Ovary (tissue), 10 donors: ENCODE measurements at regions of chr6 and their contacts with region 1.

Region 1: DNA sequence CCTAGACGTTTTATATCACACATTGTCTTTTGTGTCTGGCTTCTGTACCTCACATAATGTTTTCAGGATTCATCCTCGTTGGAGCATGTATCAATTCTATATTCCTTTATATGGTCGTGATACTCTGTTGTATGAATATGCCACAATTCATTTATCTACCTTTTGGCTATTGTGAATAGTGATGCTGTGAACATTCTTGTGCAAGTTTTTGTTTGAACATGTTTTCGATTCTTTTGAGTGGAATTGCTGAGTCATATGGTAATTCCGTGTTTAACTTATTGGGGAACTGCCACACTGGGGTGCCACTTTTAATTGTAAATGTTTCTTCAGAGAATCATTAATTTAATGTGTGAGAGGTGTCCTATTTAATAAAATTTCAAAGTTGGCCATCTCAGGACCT is 101.2 kb downstream of the SLC35B3 start:
- DNase-seq: no peak
- H3K4me3 ChIP-seq: no peak overlapping the region
- H3K27ac ChIP-seq: no peak overlapping the region
- H3K4me1 ChIP-seq: no peaks in the 10 kb centered on the region
- H3K27me3 ChIP-seq: no peaks in the 10 kb centered on the region
- CTCF ChIP-seq: no peak
- EP300 ChIP-seq: no peak
- POLR2A ChIP-seq: no peak

Region 2: DNA sequence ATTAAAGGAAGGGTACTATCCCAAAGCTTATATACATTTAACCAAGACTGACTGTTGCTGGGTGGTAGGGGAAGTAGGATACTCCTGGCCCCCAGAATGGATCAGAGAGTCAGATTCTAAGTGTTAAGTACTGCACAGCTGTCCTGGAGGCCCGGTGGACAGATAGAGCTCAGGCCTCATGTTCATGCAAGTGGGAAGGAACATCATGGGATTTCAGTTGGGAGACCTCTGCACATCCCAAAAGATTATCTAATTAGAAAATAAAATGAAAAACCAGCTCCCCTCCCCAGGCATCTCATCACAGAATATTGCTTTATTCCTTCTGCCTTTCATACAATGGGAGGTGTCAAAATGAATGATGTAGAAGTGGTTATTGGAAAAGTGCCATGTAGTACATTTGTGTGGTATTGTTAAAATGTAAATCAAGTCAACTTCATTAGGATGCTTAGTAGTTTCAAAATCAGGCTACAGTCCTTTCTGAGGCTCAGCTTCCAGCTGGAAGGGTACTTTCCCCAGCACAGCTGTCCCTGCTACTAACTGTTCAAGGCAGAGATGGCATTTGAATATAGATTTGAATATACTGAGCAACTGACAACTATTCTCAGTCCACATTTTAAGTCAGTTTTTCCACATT is 18.3 kb after region 1 on chr6:
- intact Hi-C with region 1: no loop called
- DNase-seq: no peak
- H3K4me3 ChIP-seq: no peak overlapping the region
- H3K27ac ChIP-seq: no peak overlapping the region
- H3K4me1 ChIP-seq: no peaks in the 10 kb centered on the region
- H3K27me3 ChIP-seq: no peaks in the 10 kb centered on the region
- CTCF ChIP-seq: no peak
- EP300 ChIP-seq: no peak
- POLR2A ChIP-seq: no peak

Region 3: DNA sequence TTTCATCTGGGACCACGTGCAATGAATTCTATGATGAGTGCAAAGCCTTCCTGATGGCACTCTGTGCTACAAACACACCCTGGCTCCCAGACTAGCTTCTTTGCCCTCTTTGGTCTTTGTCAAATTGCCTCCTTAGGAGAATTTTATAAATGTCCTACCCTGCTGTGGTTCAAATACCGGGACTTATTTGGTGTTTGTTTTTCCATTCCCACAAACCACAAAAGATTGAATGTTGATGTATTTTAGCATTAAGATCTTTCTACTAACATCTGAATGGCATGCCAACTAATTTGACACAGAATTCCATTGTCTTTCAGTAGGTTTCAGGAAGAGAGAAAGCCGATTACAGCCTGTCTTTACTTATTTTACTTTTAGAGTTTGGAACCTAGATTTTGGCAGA is 525.4 kb after region 1 on chr6:
- intact Hi-C with region 1: loop called in 1 of 4 experiments (anchors 5 kb)
- DNase-seq: no peak
- H3K4me3 ChIP-seq: no peak overlapping the region
- H3K27ac ChIP-seq: no peak overlapping the region
- H3K4me1 ChIP-seq: no peaks in the 10 kb centered on the region
- H3K27me3 ChIP-seq: no peaks in the 10 kb centered on the region
- CTCF ChIP-seq: no peak
- EP300 ChIP-seq: no peak
- POLR2A ChIP-seq: no peak